Activated B cell treated with CpG ODN at 0.5 μM for 24 hours (primary cell): ENCODE measurements at regions of chr1 and their contacts with region 1.

Region 1: GRCh38 chr1:44213222-44214112 is at the start of gene DMAP1:
- DNase-seq: peak; percentile 87
- ATAC-seq: peak; percentile 83
- H3K4me3 Mint-ChIP-seq: peak within 1 kb of the TSS; percentile 95
- H3K27ac Mint-ChIP-seq: peak within 1 kb of the TSS; percentile 91
- H3K4me1 Mint-ChIP-seq: peaks cover 38% of the 10 kb centered on the region
- H3K27me3 Mint-ChIP-seq: no peaks in the 10 kb centered on the region
- CTCF ChIP-seq: no peak
- total RNA-seq, gene DMAP1: 59.6 and 64.7 TPM in 2 replicates

Region 2: GRCh38 chr1:43405219-43405875 is 808.1 kb before region 1 on chr1:
- CTCF ChIA-PET with region 1: no interaction called
- POLR2A ChIA-PET with region 1: no interaction called
- intact Hi-C with region 1: no loop called
- DNase-seq: no peak
- ATAC-seq: no peak
- H3K4me3 Mint-ChIP-seq: no peak overlapping the region
- H3K27ac Mint-ChIP-seq: no peak overlapping the region
- H3K4me1 Mint-ChIP-seq: peaks cover 2% of the 10 kb centered on the region
- H3K27me3 Mint-ChIP-seq: no peaks in the 10 kb centered on the region
- CTCF ChIP-seq: no peak

Region 3: DNA sequence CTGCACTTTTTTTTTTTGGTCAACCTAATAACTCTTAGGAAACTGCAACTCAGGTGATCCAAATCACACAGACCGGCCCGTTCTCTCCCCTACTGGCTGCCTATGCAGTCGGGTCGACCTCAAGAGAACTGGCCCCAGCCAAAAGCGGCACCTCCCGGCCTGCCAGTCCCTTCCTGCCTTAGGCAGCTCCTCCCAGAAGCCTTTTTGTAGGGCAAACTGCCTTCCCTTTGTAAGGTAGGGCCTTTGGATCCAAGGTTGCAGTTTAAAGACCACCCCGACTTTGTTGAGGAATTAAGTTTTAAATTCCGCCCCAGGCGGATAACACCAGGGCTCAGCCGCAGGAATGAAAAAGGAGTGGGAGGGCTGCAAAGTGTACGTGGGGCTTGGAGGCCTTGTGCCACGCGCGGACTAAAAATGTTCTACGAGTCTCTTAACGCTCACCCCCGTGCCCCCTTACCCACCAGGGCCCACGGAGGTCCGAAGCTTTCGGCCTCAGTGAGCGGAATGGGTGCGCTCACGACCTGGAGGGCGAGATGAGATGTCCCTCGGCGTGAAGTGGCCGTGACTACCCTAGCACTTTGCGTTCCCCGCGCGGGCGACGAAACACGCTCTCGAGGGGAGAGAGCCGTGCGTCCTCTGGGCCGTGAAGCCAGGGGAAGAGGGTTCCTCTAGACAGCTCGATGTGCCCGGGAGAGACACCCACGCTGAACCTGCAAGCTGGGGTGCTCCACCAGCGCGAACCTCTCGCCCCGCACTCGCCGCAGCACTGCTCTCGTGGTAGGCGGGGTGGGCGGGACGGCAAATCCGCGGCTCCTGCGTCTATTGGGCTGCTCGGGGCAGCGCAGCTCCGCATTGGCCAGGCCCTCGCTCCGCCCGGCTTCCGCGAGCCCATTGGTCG is 506.6 kb before region 1 on chr1:
- CTCF ChIA-PET with region 1: no interaction called
- POLR2A ChIA-PET with region 1: no interaction called
- intact Hi-C with region 1: loop called (anchors 5 kb)
- DNase-seq: no peak
- ATAC-seq: peak; percentile 97
- H3K4me3 Mint-ChIP-seq: peak overlapping the region; percentile 86
- H3K27ac Mint-ChIP-seq: peak overlapping the region; percentile 63
- H3K4me1 Mint-ChIP-seq: peaks cover 33% of the 10 kb centered on the region
- H3K27me3 Mint-ChIP-seq: no peaks in the 10 kb centered on the region
- CTCF ChIP-seq: no peak

Region 4: DNA sequence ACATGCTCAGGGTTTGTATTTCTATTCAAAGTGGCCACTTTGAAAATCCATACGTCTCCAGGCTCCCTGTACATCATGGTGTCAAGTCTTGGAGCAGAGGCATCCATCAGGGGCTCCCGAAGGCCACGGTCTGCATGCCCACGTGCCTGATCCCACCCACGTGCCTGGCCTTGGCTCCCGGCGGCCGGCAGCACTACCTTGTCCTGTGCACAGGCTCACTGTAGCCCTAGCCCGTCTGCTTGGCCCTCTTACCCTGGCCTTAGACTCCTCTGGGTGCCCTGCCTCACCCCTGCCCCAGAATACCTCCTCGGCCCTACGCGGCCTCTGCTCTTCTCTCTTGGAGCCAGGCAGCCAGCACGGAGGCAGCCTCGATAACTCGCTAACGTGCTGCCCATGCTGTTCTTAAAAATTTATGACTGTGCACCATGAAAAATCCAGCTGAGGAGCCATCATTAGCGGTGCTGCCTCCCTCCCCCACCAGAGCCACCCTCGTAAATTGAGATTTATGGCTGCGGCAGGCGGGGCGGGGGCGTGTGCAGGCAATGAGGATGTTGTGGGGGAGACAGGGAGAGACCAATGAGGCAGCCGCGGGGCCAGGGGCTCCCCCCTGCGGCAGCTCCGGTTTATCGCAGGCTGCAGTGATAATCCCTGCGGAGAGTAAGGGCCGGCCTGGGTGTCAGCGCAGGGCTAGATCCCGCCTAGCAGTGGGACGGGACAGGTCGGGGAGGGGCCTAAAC is 24.4 kb after region 1 on chr1:
- CTCF ChIA-PET with region 1: interaction called, 6 read pairs
- POLR2A ChIA-PET with region 1: no interaction called
- intact Hi-C with region 1: loop called (anchors 1 kb)
- DNase-seq: no peak
- ATAC-seq: peak; percentile 85
- H3K4me3 Mint-ChIP-seq: no peak overlapping the region
- H3K27ac Mint-ChIP-seq: no peak overlapping the region
- H3K4me1 Mint-ChIP-seq: peaks cover 9% of the 10 kb centered on the region
- H3K27me3 Mint-ChIP-seq: no peaks in the 10 kb centered on the region
- CTCF ChIP-seq: no peak

Region 5: GRCh38 chr1:44318097-44319088 is 104.9 kb after region 1 on chr1:
- CTCF ChIA-PET with region 1: interaction called, 5 read pairs
- POLR2A ChIA-PET with region 1: no interaction called
- intact Hi-C with region 1: loop called (anchors 1 kb)
- DNase-seq: peak; percentile 31
- ATAC-seq: no peak
- H3K4me3 Mint-ChIP-seq: no peak overlapping the region
- H3K27ac Mint-ChIP-seq: no peak overlapping the region
- H3K4me1 Mint-ChIP-seq: peaks cover 12% of the 10 kb centered on the region
- H3K27me3 Mint-ChIP-seq: no peaks in the 10 kb centered on the region
- CTCF ChIP-seq: peak; percentile 63

Region 6: GRCh38 chr1:44354840-44355581 is 141.5 kb after region 1 on chr1 and contains the start of gene ERI3:
- CTCF ChIA-PET with region 1: no interaction called
- POLR2A ChIA-PET with region 1: no interaction called
- intact Hi-C with region 1: loop called (anchors 1 kb)
- DNase-seq: peak; percentile 91
- ATAC-seq: peak; percentile 99
- H3K4me3 Mint-ChIP-seq: peak within 1 kb of the TSS; percentile 90
- H3K27ac Mint-ChIP-seq: peak within 1 kb of the TSS; percentile 83
- H3K4me1 Mint-ChIP-seq: peaks cover 28% of the 10 kb centered on the region
- H3K27me3 Mint-ChIP-seq: no peaks in the 10 kb centered on the region
- CTCF ChIP-seq: no peak
- total RNA-seq, gene ERI3: 36.2 and 37.9 TPM in 2 replicates

Region 7: DNA sequence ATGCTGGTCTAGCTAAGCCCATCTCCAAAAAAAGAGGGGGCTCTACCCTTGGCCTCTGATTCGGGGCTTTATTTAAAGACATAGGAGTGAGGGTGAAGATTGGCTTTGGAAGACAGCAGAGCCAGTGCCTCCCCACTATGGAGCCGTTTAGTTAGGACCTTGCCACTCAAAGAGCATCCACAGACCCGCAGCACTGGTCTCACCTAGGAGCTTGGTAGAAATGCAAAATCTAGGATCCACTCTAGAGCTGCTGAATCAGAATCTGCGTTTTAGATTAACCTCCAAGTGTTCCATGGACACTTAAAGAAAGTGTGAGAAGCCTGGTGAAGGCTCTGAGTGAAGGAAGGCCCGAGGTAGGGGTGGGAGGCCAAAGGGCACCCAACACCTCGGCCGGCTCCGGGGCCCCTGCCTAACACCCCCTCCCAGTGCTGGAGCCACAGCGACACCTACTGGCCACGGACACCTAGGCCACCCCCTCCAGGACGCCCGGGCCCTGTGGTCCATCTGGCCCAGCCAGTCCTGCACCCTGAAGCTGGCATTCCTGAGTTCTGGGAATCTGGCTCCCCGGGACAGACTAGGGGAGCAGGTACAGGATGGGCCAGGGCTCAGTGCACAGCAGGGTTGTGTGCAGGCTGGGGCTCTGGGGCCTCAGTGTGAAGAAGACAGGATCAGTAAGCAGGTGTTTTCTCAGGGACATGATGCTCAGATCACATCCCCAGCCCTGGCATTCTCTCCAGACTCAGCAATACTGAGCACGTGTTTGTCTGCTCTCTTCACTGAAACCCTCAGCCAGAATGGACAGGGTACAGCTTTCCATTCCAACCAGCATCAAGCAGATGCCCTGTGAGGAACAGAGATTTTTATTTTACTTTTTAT is 381.6 kb after region 1 on chr1:
- CTCF ChIA-PET with region 1: interaction called, 4 read pairs
- POLR2A ChIA-PET with region 1: no interaction called
- intact Hi-C with region 1: loop called (anchors 1 kb)
- DNase-seq: peak; percentile 74
- ATAC-seq: peak; percentile 92
- H3K4me3 Mint-ChIP-seq: no peak overlapping the region
- H3K27ac Mint-ChIP-seq: no peak overlapping the region
- H3K4me1 Mint-ChIP-seq: no peaks in the 10 kb centered on the region
- H3K27me3 Mint-ChIP-seq: peaks cover 6% of the 10 kb centered on the region
- CTCF ChIP-seq: no peak

Region 8: DNA sequence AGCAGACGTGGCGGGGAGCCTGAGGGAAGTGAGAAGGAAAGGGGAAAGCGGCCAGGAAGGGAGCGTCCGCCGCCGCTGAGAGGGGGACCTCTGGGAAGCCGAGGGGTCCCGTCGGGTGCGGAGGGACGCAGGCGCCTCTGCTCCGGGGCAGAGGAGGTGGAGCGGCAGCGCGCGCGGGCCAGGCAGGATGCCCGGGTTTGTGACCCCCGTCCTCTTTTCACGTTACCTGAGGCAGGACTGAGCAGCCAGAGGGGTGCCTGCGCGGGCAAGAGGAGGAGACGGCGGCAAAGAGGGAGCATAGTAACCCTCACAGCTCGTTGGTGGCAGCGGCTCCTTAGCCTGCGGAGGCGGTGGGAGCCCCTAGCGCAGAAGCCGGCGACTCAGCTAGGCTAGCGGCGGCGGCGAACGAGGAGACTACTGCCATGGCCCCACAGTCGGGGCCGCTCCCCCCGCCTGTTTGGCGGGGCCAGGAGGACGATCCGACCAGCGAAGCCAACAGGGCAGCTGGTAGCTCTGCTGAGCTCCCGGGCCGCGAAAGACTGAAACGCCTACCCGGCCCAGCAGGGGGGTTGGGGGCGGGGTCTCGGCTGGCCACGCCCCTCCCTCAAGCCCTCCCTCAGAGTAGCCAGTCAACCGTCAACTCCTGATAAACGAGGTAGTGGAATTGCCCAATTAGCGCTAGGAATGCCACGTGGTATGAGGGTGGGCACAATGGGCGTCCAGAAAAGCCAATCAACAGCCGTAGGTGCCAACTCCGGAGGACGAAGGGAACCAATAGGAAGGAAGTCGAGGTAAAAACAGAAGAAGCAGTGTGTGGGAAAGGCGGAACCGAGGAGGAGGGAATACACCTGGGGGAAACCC is 1277.4 kb after region 1 on chr1 and contains the start of gene TESK2:
- CTCF ChIA-PET with region 1: no interaction called
- POLR2A ChIA-PET with region 1: no interaction called
- intact Hi-C with region 1: no loop called
- DNase-seq: peak; percentile 95
- ATAC-seq: peak; percentile 89
- H3K4me3 Mint-ChIP-seq: no peak within 1 kb of the TSS
- H3K27ac Mint-ChIP-seq: no peak within 1 kb of the TSS
- H3K4me1 Mint-ChIP-seq: peaks cover 12% of the 10 kb centered on the region
- H3K27me3 Mint-ChIP-seq: no peaks in the 10 kb centered on the region
- CTCF ChIP-seq: no peak
- total RNA-seq, gene TESK2: 11.7 and 12.2 TPM in 2 replicates